ENCODE measurements at regions of chr15 and their contacts with region 1.

Region 1: GRCh38 chr15:31488426-31489204 is 162.0 kb downstream of the KLF13 start:
- DNase-seq: peak; percentile 54
- H3K4me3 Mint-ChIP-seq: no peak overlapping the region
- H3K27ac Mint-ChIP-seq: peak overlapping the region; percentile 65
- H3K4me1 Mint-ChIP-seq: peaks cover 56% of the 10 kb centered on the region
- H3K27me3 Mint-ChIP-seq: peaks cover 3% of the 10 kb centered on the region

Region 2: DNA sequence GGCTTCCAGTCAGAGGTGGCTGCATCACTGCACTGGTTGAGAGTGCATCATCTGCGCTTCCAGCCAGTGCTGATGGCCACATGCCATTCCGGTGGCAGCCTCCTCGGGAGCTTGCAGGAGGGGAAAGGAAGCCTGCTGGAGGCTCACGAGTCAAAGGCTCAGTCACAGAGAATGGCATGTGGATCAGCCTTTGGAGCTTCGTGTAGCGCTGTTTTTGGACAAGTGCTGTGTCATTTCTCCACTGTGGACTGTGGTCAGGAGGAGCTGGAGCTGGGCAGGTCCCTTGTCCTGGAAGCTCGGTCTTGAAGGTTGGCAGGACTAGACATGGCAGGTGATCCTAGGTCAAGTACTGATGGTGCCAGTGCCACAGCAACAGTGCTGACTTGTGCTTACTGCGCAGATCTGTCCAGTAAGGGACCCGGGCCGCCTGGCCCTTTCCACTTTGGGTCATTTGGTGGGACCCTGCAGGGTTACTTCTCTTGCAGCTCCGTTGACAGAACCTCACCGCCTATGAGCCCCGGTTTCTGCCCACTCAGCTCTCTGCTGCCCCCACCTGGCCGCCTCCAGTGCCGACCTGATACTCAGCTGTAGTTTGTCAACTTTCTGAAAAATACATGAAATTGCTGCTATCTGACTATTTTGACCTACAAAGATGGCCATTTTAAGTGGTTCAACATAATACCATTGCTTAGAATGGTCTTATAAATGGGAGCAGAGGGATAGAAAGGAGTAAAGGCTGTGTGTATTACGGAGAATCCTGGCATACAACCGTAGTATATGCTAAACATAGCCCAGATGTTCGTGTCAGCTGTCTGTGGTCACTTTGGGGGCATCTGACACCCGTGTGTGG is 359.5 kb before region 1 on chr15:
- CTCF ChIA-PET with region 1: interaction called, 10 read pairs
- POLR2A ChIA-PET with region 1: no interaction called
- intact Hi-C with region 1: no loop called
- DNase-seq: peak; percentile 81
- H3K4me3 Mint-ChIP-seq: no peak overlapping the region
- H3K27ac Mint-ChIP-seq: no peak overlapping the region
- H3K4me1 Mint-ChIP-seq: no peaks in the 10 kb centered on the region
- H3K27me3 Mint-ChIP-seq: no peaks in the 10 kb centered on the region

Region 3: GRCh38 chr15:31265871-31266711 is 222.5 kb before region 1 on chr15:
- CTCF ChIA-PET with region 1: interaction called, 11 read pairs
- POLR2A ChIA-PET with region 1: no interaction called
- intact Hi-C with region 1: loop called (anchors 5 kb)
- DNase-seq: peak; percentile 82
- H3K4me3 Mint-ChIP-seq: peak overlapping the region; percentile 9
- H3K27ac Mint-ChIP-seq: peak overlapping the region; percentile 59
- H3K4me1 Mint-ChIP-seq: peaks cover 68% of the 10 kb centered on the region
- H3K27me3 Mint-ChIP-seq: no peaks in the 10 kb centered on the region

Region 4: DNA sequence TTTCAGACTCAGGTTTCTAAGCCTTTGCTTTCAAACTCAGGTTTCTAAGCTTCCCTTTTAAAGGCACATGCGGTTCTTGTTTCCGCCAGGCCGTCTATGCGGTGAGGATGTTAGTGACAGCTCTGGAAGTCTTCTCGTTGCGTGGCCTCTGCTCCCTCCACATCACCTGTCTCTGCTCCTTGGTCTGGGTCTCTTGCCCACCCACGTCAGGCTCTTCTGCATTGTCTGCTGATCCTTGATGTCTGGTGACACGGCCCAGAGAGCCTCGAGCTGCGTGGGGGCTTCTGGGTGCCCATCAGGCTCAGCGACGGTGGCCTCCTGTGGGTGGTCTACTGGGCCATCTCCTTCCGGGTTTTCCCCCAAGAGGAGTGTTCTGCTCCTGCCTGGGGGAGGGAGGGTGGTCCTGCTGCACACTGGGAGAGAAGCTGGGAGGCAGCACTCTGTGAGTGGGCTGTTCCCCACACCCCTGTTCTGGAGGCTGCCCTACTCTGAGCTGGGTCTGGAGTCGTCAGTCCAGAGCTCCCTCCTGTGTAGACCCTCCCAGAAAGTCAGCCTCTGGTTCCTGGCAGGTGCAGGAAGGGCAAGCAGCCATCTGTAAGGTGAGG is 131.4 kb before region 1 on chr15:
- CTCF ChIA-PET with region 1: interaction called, 14 read pairs
- POLR2A ChIA-PET with region 1: interaction called, 4 read pairs
- intact Hi-C with region 1: no loop called
- DNase-seq: peak; percentile 60
- H3K4me3 Mint-ChIP-seq: peak overlapping the region; percentile 65
- H3K27ac Mint-ChIP-seq: peak overlapping the region; percentile 97
- H3K4me1 Mint-ChIP-seq: peaks cover 99% of the 10 kb centered on the region
- H3K27me3 Mint-ChIP-seq: no peaks in the 10 kb centered on the region

Region 5: GRCh38 chr15:31435261-31435911 is 53.2 kb before region 1 on chr15:
- CTCF ChIA-PET with region 1: interaction called, 312 read pairs
- POLR2A ChIA-PET with region 1: interaction called, 36 read pairs
- intact Hi-C with region 1: loop called (anchors 1 kb)
- DNase-seq: peak; percentile 92
- H3K4me3 Mint-ChIP-seq: peak overlapping the region; percentile 64
- H3K27ac Mint-ChIP-seq: peak overlapping the region; percentile 99
- H3K4me1 Mint-ChIP-seq: peaks cover 76% of the 10 kb centered on the region
- H3K27me3 Mint-ChIP-seq: no peaks in the 10 kb centered on the region

Region 6: GRCh38 chr15:31472636-31473384 is 15.8 kb before region 1 on chr15:
- CTCF ChIA-PET with region 1: interaction called, 90 read pairs
- POLR2A ChIA-PET with region 1: interaction called, 27 read pairs
- intact Hi-C with region 1: loop called (anchors 1 kb)
- DNase-seq: peak; percentile 78
- H3K4me3 Mint-ChIP-seq: peak overlapping the region; percentile 65
- H3K27ac Mint-ChIP-seq: peak overlapping the region; percentile 87
- H3K4me1 Mint-ChIP-seq: peaks cover 49% of the 10 kb centered on the region
- H3K27me3 Mint-ChIP-seq: no peaks in the 10 kb centered on the region

Region 7: GRCh38 chr15:31953478-31953877 is 464.9 kb after region 1 on chr15:
- CTCF ChIA-PET with region 1: no interaction called
- POLR2A ChIA-PET with region 1: no interaction called
- intact Hi-C with region 1: no loop called
- DNase-seq: no peak
- H3K4me3 Mint-ChIP-seq: no peak overlapping the region
- H3K27ac Mint-ChIP-seq: no peak overlapping the region
- H3K4me1 Mint-ChIP-seq: no peaks in the 10 kb centered on the region
- H3K27me3 Mint-ChIP-seq: peaks cover 27% of the 10 kb centered on the region